Breast epithelium (tissue), 4 donors: ENCODE measurements at regions of chr15 and their contacts with region 1.

Region 1: GRCh38 chr15:78049691-78050440 is 27.6 kb downstream of the TBC1D2B start:
- DNase-seq: no peak
- H3K4me3 ChIP-seq: no peak overlapping the region
- H3K27ac ChIP-seq: peak overlapping the region; percentile 67 to 83
- H3K4me1 ChIP-seq: peaks cover 6 to 7% of the 10 kb centered on the region in 2 donors
- H3K27me3 ChIP-seq: no peaks in the 10 kb centered on the region
- CTCF ChIP-seq: no peak
- POLR2A ChIP-seq: no peak

Region 2: GRCh38 chr15:77784395-77785292 is 265.2 kb before region 1 on chr15:
- intact Hi-C with region 1: loop called (anchors 5 kb)
- DNase-seq: no peak
- H3K4me3 ChIP-seq: no peak overlapping the region
- H3K27ac ChIP-seq: no peak overlapping the region
- H3K4me1 ChIP-seq: no peaks in the 10 kb centered on the region
- H3K27me3 ChIP-seq: peaks cover 0 to 20% of the 10 kb centered on the region in 2 donors
- CTCF ChIP-seq: no peak
- POLR2A ChIP-seq: no peak

Region 3: DNA sequence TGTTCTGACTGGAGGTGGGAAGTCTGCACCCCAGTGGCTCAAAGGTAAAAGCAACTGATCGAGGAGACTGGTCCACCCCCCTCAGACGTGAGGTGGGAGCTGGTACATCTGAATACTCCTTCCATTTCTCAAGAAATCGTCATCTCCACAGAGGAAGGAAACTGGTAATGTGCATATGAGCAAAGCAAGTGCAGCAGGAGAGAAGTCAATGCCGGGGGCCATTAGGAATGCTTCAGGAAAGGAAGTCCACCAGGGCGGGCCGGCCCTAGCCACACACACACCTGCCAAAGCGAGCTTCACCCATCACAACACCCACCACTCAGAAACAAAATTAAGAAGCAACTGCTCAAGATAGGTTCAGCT is 19.2 kb after region 1 on chr15:
- intact Hi-C with region 1: loop called (anchors 1 kb)
- DNase-seq: no peak
- H3K4me3 ChIP-seq: peak overlapping the region in 1 of 3 donors; percentile 2
- H3K27ac ChIP-seq: peak overlapping the region; percentile 91 to 95
- H3K4me1 ChIP-seq: peaks cover 5 to 39% of the 10 kb centered on the region in 2 donors
- H3K27me3 ChIP-seq: no peaks in the 10 kb centered on the region
- CTCF ChIP-seq: no peak
- POLR2A ChIP-seq: no peak

Region 4: GRCh38 chr15:78204351-78205309 is 154.8 kb after region 1 on chr15:
- intact Hi-C with region 1: no loop called
- DNase-seq: peak in 1 of 2 donors; percentile 12
- H3K4me3 ChIP-seq: no peak overlapping the region
- H3K27ac ChIP-seq: no peak overlapping the region
- H3K4me1 ChIP-seq: no peaks in the 10 kb centered on the region
- H3K27me3 ChIP-seq: peaks cover 0 to 5% of the 10 kb centered on the region in 2 donors
- CTCF ChIP-seq: no peak
- POLR2A ChIP-seq: no peak